Lower leg skin (tissue), 4 donors: ENCODE measurements at regions of chr4 and their contacts with region 1.

Region 1: DNA sequence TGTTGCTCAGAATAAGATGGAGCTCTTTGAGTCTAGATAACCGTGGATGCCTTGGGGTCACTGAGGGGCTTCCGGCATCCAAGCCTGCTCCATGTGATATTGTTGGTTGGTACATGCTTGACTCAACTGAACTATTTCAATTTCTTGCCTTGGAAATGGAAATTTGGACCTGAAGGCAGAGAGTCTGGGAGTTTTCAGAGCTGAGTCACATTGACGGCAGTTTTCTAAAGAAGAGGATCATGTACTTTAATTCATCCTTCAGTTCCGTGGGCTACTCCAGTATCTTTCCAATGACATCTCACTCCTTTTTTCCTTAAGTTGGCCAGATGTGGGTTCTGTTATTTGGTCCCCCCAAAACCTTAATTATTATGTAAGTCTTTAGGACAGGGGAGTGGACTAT is 100.5 kb downstream of the MFAP3L start:
- DNase-seq: no peak
- H3K4me3 ChIP-seq: no peak overlapping the region
- CTCF ChIP-seq: no peak
- POLR2A ChIP-seq: no peak

Region 2: DNA sequence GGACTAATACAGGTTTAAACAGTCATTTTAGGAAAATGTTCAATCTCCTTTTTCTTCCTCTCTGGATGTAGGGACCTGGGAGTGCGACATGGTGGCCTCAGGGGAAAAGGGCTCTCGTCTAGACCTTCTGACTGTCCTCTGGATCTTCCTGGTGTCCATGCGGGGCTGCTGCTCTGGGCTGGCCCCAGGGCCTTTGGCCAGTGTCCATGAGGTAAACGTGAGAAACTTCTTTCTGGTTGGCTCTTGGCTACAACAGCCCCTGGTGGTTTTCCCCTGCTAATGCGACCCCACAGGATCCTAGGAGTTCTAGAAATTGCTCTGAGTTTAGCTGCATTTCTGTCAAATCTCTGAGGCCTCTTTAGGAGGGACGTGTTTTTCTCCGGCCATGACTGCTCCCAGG is 14.8 kb after region 1 on chr4:
- intact Hi-C with region 1: loop called (anchors 2 kb)
- DNase-seq: no peak
- H3K4me3 ChIP-seq: no peak overlapping the region
- CTCF ChIP-seq: no peak
- POLR2A ChIP-seq: no peak